HCT116 (cell line): ENCODE measurements at regions of chr21 and their contacts with region 1.

Region 1: DNA sequence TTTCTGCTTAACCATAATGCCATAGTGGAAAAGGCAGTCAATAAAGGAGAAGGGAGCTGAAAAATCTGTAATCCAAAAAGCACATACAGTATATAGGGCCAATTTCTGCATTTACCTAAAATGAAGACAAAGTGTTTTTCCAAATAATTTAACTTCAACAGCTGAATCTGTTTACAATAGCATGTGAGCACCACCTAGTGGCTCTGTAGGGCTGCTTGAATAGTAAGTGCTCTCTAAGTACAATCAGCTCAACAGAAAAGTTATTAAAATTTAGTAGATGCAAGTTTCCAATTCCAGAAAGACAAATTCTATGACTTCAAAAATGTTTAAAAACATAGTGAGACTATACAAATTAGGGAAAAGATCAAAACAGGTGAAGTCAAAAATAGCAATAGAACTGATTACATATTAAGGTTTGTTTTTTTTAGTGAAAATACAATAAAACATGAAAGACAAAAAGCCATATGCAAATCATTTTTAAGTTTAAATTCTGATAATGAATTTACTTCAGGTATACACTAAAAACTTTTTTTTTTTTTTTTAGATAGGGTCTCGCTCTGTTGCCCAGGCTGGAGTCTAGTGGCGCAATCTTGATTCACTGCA is 220.0 kb downstream of the SETD4 start:
- DNase-seq: peak; percentile 72
- ATAC-seq: peak; percentile 73
- H3K4me3 ChIP-seq: no peak overlapping the region
- H3K27ac ChIP-seq: no peak overlapping the region
- H3K4me1 ChIP-seq: no peaks in the 10 kb centered on the region
- H3K27me3 ChIP-seq: no peaks in the 10 kb centered on the region
- CTCF ChIP-seq: peak; percentile 61 to 93 (median 81); a peak in 5 of 6 replicates
- POLR2A ChIP-seq: no peak
- RAD21 ChIP-seq: peak; percentile 85

Region 2: DNA sequence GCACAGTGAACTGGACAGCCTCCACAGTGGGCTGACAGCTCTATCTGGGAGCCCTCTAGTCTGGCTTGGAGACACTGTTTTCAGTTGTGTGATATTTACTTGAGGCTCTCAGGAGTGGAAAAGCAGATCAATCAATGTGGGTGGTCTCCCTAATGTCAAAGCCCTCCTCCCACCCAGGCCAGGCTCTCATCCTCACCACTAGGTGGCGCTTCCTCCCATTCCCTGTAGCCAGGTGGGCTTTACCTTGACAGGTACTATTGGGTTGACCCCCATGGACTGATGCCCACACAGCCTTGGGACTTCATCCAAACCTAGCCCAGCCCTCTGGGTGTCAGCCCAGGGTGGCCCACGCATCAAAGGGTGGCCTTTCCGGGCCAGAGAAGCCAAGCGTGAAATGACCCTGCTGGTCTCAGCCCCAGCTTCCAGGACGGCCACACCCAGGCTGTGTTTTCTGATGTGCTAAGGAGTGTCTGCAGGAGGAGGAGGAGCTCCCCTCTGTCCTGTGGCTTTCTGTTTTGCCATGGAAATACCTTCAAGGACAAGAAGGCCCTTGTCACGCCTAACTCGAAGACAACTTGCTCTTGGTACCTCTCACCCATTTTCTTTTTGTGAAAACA is 1117.5 kb before region 1 on chr21:
- CTCF ChIA-PET with region 1: no interaction called
- POLR2A ChIA-PET with region 1: no interaction called
- RAD21 ChIA-PET with region 1: no interaction called
- intact Hi-C with region 1: loop called (anchors 1 kb)
- DNase-seq: no peak
- ATAC-seq: peak; percentile 86
- H3K4me3 ChIP-seq: no peak overlapping the region
- H3K27ac ChIP-seq: no peak overlapping the region
- H3K4me1 ChIP-seq: peaks cover 4 to 6% of the 10 kb centered on the region in 2 experiments; a peak in 3 of 4 replicates
- H3K27me3 ChIP-seq: no peaks in the 10 kb centered on the region
- CTCF ChIP-seq: peak; percentile 4 to 97 (median 93); a peak in 4 of 6 replicates
- POLR2A ChIP-seq: no peak
- RAD21 ChIP-seq: peak; percentile 53

Region 3: DNA sequence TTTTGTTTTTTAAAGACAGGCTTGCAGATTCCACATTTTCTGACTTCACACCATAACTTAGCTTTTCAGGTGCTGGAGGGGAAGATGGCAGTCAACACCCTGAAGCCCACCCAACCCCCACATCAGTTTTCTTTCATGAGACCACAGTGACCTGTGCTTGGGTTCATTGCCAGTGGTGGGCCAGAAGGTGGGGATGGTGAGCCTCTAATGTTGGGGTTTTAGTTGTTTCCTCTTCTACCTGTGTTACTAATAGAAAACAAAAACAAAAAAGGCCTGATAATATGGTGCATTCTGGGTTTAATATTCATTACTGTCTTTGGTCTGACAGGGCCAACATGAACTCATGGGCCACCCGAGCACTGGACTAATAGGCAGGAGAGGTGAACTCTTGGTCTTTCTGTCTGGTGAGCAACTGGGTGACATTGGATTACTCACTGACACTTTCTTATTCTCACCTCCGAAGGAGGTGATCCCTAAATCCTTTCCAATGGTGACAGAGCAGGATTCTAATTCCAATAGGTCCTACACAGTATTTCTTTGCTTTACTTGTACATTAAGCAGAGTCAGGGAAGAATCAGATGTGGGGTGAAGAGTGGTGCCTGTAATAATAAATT is 1038.7 kb before region 1 on chr21:
- CTCF ChIA-PET with region 1: no interaction called
- POLR2A ChIA-PET with region 1: no interaction called
- RAD21 ChIA-PET with region 1: no interaction called
- intact Hi-C with region 1: loop called (anchors 5 kb)
- DNase-seq: no peak
- ATAC-seq: peak; percentile 50
- H3K4me3 ChIP-seq: no peak overlapping the region
- H3K27ac ChIP-seq: peak overlapping the region; percentile 56
- H3K4me1 ChIP-seq: peaks cover 59 to 80% of the 10 kb centered on the region in 2 experiments
- H3K27me3 ChIP-seq: no peaks in the 10 kb centered on the region
- CTCF ChIP-seq: peak in 2 of 3 experiments; percentile 53 to 54; a peak in 4 of 6 replicates
- POLR2A ChIP-seq: no peak
- RAD21 ChIP-seq: no peak

Region 4: GRCh38 chr21:35340269-35340668 is 500.0 kb before region 1 on chr21:
- CTCF ChIA-PET with region 1: interaction called, 10 read pairs
- POLR2A ChIA-PET with region 1: no interaction called
- RAD21 ChIA-PET with region 1: no interaction called
- intact Hi-C with region 1: no loop called
- DNase-seq: peak; percentile 22
- ATAC-seq: peak; percentile 86
- H3K4me3 ChIP-seq: no peak overlapping the region
- H3K27ac ChIP-seq: no peak overlapping the region
- H3K4me1 ChIP-seq: peaks cover 0 to 4% of the 10 kb centered on the region in 2 experiments; a peak in 2 of 4 replicates
- H3K27me3 ChIP-seq: no peaks in the 10 kb centered on the region
- CTCF ChIP-seq: peak; percentile 19 to 52 (median 47); a peak in 4 of 6 replicates
- POLR2A ChIP-seq: no peak
- RAD21 ChIP-seq: peak; percentile 63

Region 5: DNA sequence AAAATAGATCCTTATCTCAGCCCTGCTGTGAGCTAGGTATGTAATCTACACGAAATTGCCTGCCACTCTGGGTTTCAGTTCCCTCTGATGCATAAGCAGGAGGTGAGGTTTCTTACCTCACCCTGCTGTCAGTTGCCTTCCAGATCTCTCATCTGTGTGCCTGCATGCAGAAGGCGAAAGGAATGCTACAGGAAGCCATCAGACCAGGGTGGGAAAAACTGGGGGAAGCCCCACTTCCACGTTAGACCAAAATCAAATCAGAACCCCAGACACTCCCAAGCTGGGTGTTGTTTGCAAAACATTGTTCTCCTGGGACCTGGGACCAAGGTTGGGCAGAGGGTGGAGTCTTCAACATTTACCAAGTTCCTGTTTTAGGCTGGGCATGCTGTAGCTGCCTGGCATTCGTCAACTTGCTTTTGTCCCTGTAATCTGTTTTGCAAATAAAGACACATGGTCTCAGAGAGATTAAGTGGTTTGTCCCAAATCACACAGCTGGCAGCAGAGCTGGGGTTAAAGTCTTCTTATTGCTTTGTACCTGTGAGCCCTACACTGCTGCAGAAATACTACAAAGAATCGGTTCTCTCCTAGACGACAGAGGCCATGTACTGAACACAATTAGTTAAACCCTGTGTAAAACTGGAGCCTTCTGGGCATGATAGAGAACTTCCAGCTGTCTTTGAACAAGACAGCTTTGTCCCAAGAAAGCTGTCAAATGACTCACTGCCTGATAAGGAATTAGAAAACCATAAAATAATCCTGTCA is 401.5 kb before region 1 on chr21:
- CTCF ChIA-PET with region 1: interaction called, 12 read pairs
- POLR2A ChIA-PET with region 1: no interaction called
- RAD21 ChIA-PET with region 1: no interaction called
- intact Hi-C with region 1: loop called (anchors 10 kb)
- DNase-seq: no peak
- ATAC-seq: no peak
- H3K4me3 ChIP-seq: no peak overlapping the region
- H3K27ac ChIP-seq: no peak overlapping the region
- H3K4me1 ChIP-seq: no peaks in the 10 kb centered on the region
- H3K27me3 ChIP-seq: no peaks in the 10 kb centered on the region
- CTCF ChIP-seq: no peak
- POLR2A ChIP-seq: no peak
- RAD21 ChIP-seq: no peak

Region 6: DNA sequence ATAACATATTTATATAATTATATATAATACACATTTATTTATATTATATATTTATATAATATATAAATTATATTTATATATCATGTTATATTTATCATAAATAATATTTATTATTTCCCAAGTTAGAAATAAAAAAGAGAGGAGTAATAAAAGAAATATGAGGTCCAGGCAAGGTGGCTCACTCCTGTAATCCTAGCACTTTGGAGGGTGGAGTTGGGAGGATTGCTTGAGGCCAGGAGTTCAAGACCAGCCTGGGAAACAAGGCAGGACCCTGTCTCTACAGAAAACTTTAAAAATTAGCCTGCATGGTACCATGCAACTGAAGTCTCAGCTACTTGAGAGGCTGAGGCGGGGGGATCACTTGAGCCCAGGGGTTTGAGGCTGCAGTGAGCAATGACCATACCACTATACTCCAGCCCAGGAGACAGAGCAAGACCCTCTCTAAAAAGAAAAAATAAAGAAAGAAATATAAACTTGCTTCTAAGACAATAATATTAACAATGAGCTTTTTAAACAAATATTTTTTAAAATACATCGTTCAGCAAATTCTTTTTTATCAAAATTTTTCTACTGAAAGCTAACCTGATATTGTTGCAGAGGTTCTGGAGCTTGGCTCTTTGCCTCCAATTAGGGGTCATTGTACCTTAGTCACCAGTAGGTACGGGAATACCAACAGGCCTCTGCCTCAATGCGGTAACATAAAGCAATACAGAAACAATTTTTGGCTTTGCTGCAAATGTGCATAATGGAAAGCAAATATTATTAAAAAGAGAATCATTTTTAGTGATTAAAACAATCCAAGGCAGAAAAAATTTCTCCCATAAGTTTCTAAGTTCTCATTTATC is 70.0 kb before region 1 on chr21:
- CTCF ChIA-PET with region 1: no interaction called
- POLR2A ChIA-PET with region 1: no interaction called
- RAD21 ChIA-PET with region 1: no interaction called
- intact Hi-C with region 1: no loop called
- DNase-seq: no peak
- ATAC-seq: no peak
- H3K4me3 ChIP-seq: no peak overlapping the region
- H3K27ac ChIP-seq: no peak overlapping the region
- H3K4me1 ChIP-seq: no peaks in the 10 kb centered on the region
- H3K27me3 ChIP-seq: no peaks in the 10 kb centered on the region
- CTCF ChIP-seq: no peak
- POLR2A ChIP-seq: no peak
- RAD21 ChIP-seq: no peak

Region 7: GRCh38 chr21:36035381-36035791 is 195.1 kb after region 1 on chr21:
- CTCF ChIA-PET with region 1: no interaction called
- POLR2A ChIA-PET with region 1: no interaction called
- RAD21 ChIA-PET with region 1: no interaction called
- intact Hi-C with region 1: no loop called
- DNase-seq: no peak
- ATAC-seq: peak; percentile 30; the same call in 1 of the 2 replicates
- H3K4me3 ChIP-seq: no peak overlapping the region
- H3K27ac ChIP-seq: no peak overlapping the region
- H3K4me1 ChIP-seq: no peaks in the 10 kb centered on the region
- H3K27me3 ChIP-seq: no peaks in the 10 kb centered on the region
- CTCF ChIP-seq: no peak
- POLR2A ChIP-seq: no peak
- RAD21 ChIP-seq: no peak

Region 8: DNA sequence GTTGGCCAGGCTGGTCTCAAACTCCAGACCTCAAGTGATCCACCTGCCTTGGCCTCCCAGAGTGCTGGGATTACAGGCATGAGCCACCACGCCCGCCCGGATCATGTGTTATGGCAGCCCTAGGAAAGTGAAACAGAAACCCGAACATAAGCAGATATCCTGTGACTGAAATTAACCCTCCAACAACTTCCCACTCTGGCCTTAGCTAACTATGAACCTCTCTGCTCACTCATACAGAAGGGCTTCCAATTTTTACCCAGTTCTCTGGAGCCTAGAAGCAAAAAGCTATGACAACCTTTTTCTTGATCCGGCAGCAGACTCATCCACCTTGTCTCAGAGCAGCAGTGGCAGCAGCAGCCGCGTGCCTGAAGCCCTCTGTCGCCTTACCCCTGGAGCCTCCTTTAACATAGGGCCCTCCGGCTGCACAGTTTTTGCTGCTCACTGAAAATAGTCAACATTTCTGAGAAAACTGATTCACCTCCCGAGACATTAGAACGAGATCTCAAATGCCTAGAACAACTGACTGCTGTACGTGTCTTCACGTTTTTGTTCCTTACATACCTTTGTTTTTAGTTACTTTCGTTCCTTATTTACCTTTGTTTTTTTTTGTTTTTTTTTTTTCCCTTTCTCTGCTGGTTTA is 238.8 kb after region 1 on chr21:
- CTCF ChIA-PET with region 1: no interaction called
- POLR2A ChIA-PET with region 1: no interaction called
- RAD21 ChIA-PET with region 1: no interaction called
- intact Hi-C with region 1: no loop called
- DNase-seq: no peak
- ATAC-seq: no peak
- H3K4me3 ChIP-seq: no peak overlapping the region
- H3K27ac ChIP-seq: no peak overlapping the region
- H3K4me1 ChIP-seq: no peaks in the 10 kb centered on the region
- H3K27me3 ChIP-seq: no peaks in the 10 kb centered on the region
- CTCF ChIP-seq: no peak
- POLR2A ChIP-seq: no peak
- RAD21 ChIP-seq: no peak